ENCODE measurements at regions of chr1 and their contacts with region 1.

Region 1: GRCh38 chr1:155044812-155045690 is 6.1 kb upstream of the ADAM15 start:
- DNase-seq: peak; percentile 77
- ATAC-seq: peak; percentile 92
- H3K4me3 Mint-ChIP-seq: no peak overlapping the region
- H3K27ac Mint-ChIP-seq: no peak overlapping the region
- H3K4me1 Mint-ChIP-seq: peaks cover 35% of the 10 kb centered on the region
- H3K27me3 Mint-ChIP-seq: no peaks in the 10 kb centered on the region; the same call in none of the 2 replicates
- CTCF ChIP-seq: no peak; the same call in 1 of the 2 replicates

Region 2: DNA sequence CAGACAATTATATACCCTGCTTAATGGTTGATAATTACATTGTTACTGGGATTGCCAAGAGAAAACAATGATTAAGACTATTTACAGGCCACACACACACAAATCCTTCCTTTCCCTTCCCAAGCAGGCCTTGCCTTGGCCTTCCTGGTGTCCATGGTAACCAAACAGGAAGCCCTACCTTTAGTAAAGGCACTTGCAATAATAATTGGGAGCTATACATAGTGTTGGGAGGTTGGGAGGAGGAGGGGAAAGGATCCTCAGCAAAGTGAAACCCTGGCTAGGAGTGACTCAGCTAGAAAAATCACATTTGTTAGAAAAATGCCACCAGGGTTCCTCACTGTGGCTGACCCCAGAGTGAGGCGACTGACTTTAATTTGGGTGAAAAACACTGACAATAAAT is 314.8 kb before region 1 on chr1:
- CTCF ChIA-PET with region 1: no interaction called
- POLR2A ChIA-PET with region 1: no interaction called
- DNase-seq: no peak
- ATAC-seq: peak; percentile 72
- H3K4me3 Mint-ChIP-seq: no peak overlapping the region
- H3K27ac Mint-ChIP-seq: peak overlapping the region; percentile 60; the same call in 1 of the 2 replicates
- H3K4me1 Mint-ChIP-seq: peaks cover 42% of the 10 kb centered on the region
- H3K27me3 Mint-ChIP-seq: no peaks in the 10 kb centered on the region; the same call in 1 of the 2 replicates
- CTCF ChIP-seq: no peak

Region 3: DNA sequence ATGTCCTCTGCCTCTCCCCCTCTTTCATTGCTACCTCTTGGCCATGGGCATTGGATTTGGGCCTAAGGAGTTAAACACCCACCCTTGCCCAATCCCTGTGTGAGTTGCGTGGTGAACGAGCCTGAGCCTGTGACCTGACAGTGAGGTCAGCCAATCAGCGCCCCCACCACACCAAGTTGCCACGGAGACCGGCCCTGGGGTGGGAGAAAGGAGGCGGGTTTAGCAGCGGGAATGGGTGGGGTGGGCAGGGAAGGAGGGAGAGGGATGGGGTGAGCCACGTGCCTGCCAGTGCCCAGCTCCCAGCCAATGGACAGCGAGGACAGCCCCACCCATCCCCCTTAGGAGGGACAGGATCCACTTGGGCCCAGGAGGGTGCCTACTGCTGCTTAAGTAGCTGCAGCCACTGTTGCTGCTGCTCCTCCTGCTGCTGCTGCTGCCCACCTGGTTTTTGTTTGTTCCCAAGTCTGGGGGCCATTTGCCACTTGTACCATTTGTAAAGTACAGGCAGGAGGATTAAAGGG is 33.0 kb before region 1 on chr1:
- CTCF ChIA-PET with region 1: interaction called, 40 read pairs
- POLR2A ChIA-PET with region 1: interaction called, 4 read pairs
- DNase-seq: peak; percentile 88
- ATAC-seq: peak; percentile 78
- H3K4me3 Mint-ChIP-seq: peak overlapping the region; percentile 45
- H3K27ac Mint-ChIP-seq: peak overlapping the region; percentile 95
- H3K4me1 Mint-ChIP-seq: peaks cover 49% of the 10 kb centered on the region
- H3K27me3 Mint-ChIP-seq: no peaks in the 10 kb centered on the region
- CTCF ChIP-seq: no peak

Region 4: GRCh38 chr1:155022927-155023236 is 22.2 kb before region 1 on chr1:
- CTCF ChIA-PET with region 1: interaction called, 40 read pairs
- POLR2A ChIA-PET with region 1: interaction called, 4 read pairs
- DNase-seq: no peak
- ATAC-seq: no peak
- H3K4me3 Mint-ChIP-seq: no peak overlapping the region
- H3K27ac Mint-ChIP-seq: no peak overlapping the region
- H3K4me1 Mint-ChIP-seq: peaks cover 21% of the 10 kb centered on the region
- H3K27me3 Mint-ChIP-seq: peaks cover 4% of the 10 kb centered on the region; the same call in 1 of the 2 replicates
- CTCF ChIP-seq: no peak

Region 5: GRCh38 chr1:155070721-155071569 is 25.9 kb after region 1 on chr1:
- CTCF ChIA-PET with region 1: interaction called, 13 read pairs
- POLR2A ChIA-PET with region 1: no interaction called
- DNase-seq: peak; percentile 94
- ATAC-seq: peak; percentile 78
- H3K4me3 Mint-ChIP-seq: peak overlapping the region; percentile 75
- H3K27ac Mint-ChIP-seq: no peak overlapping the region
- H3K4me1 Mint-ChIP-seq: peaks cover 41% of the 10 kb centered on the region
- H3K27me3 Mint-ChIP-seq: peaks cover 33% of the 10 kb centered on the region
- CTCF ChIP-seq: peak; percentile 52; the same call in 1 of the 2 replicates

Measured in WTC11 (cell line).